ENCODE measurements at regions of chr2 and their contacts with region 1.

Region 1: GRCh38 chr2:130727286-130728018 is 1.4 kb upstream of the GPR148 start:
- DNase-seq: peak; percentile 90 to 95 (median 92)
- H3K4me3 ChIP-seq: peak overlapping the region; percentile 81 to 83
- H3K4me3 Mint-ChIP-seq: peak overlapping the region; percentile 85 to 92 (median 88)
- H3K27ac ChIP-seq: peak overlapping the region; percentile 80
- H3K27ac Mint-ChIP-seq: peak overlapping the region; percentile 89 to 97 (median 95)
- H3K4me1 ChIP-seq: peaks cover 22% of the 10 kb centered on the region
- H3K4me1 Mint-ChIP-seq: peaks cover 5 to 34% (median 17%) of the 10 kb centered on the region in 4 donors
- H3K27me3 ChIP-seq: no peaks in the 10 kb centered on the region
- H3K27me3 Mint-ChIP-seq: no peaks in the 10 kb centered on the region

Region 2: DNA sequence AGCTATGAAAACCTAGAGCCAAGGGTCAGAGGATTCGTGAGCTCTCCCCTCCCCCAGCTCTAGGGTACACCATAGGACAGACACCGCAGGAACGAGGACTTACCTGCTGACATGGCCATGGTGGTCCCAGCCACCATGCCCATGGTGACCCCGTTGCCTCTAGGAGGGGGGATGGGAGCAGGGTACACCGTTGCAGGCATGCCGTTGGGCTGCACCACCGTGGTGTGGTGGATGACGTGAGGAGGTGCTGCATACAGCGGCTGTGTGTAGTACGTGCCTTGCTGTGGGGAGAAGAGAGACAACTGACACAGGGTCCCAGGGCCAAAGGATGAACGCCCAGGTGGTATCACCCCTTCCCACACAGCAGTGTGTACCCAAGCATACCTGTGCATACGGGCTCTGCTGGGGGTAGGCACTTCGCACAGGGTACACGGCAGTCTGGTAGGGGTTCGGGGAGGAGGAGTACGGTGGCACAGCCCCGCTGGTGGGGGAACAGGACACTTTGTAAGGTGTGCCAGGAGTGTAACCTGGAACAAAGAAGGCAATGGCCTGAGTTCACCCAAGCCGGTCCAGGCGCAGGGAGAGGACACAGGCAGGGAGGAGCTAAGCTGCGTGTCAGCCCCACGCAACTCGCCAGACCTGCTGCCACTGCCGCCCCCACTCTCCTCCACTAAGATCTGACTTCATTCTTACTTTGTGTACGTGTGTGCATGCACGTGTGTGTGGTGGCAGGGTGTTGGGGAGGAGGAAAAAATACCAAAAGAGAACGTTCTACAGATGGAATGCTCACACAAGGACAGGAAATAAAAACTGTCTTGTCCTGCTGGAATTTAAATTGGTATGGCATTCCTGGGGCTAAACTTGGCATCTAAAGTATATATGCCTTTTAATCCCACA is 328.0 kb after region 1 on chr2:
- CTCF ChIA-PET with region 1: no interaction called
- POLR2A ChIA-PET with region 1: no interaction called
- intact Hi-C with region 1: no loop called
- DNase-seq: no peak
- H3K4me3 ChIP-seq: no peak overlapping the region
- H3K4me3 Mint-ChIP-seq: no peak overlapping the region
- H3K27ac ChIP-seq: no peak overlapping the region
- H3K27ac Mint-ChIP-seq: peak overlapping the region in 4 of 7 donors; percentile 13 to 82 (median 47)
- H3K4me1 ChIP-seq: no peaks in the 10 kb centered on the region
- H3K4me1 Mint-ChIP-seq: peaks cover 13 to 32% (median 23%) of the 10 kb centered on the region in 4 donors
- H3K27me3 ChIP-seq: no peaks in the 10 kb centered on the region
- H3K27me3 Mint-ChIP-seq: no peaks in the 10 kb centered on the region

Region 3: DNA sequence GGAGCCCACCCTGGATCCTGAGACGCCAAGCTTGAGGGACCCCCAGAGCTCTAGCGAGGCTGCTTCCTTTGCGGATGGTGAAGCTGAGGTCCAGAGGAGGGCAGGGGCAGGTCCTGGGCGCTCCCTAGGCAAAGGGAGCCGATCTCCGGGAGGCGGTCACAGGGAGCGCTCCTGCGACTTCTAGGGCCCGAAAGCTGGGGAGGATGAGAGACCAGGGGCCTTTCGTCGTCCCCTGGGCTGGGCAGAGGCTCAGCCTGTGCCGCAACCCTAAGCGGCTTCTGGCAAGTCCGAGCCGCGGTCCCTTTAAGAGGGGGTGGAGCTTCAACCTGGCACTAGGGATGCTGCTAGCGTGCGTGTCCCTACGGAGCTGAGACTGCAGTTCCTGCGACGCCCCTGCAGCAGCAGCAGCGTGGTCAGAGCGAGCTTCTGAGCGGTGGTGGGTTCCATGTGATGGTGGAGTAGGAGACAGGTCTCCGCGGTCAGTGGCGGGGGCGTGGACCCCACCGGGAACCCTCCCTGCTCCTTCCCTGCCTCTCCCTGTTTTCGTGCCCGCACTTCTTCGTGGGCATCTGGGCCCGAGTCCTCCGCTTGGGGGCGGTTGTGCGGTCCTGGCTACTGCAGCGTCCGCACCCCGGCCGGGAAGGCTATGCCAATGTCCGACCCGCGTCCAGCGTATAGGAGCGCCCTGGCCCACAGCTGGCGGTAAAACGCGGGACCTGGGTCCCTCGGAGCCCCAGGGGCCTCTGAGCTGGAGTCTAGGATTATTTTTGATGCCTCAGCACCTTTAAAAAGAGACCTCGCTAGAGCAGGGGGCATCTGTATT is 954.9 kb after region 1 on chr2:
- CTCF ChIA-PET with region 1: no interaction called
- POLR2A ChIA-PET with region 1: no interaction called
- intact Hi-C with region 1: loop called (anchors 5 kb)
- DNase-seq: peak; percentile 49 to 79 (median 63)
- H3K4me3 ChIP-seq: peak overlapping the region; percentile 51 to 61
- H3K4me3 Mint-ChIP-seq: peak overlapping the region; percentile 85 to 95 (median 90)
- H3K27ac ChIP-seq: peak overlapping the region; percentile 31
- H3K27ac Mint-ChIP-seq: peak overlapping the region; percentile 51 to 93 (median 89)
- H3K4me1 ChIP-seq: peaks cover 25% of the 10 kb centered on the region
- H3K4me1 Mint-ChIP-seq: peaks cover 32 to 49% (median 33%) of the 10 kb centered on the region in 4 donors
- H3K27me3 ChIP-seq: no peaks in the 10 kb centered on the region
- H3K27me3 Mint-ChIP-seq: no peaks in the 10 kb centered on the region

Measured in CD4-positive, alpha-beta memory T cell (primary cell).